Breast epithelium (tissue), 4 donors: ENCODE measurements at regions of chr2 and their contacts with region 1.

Region 1: GRCh38 chr2:120758181-120759144 is 22.8 kb downstream of the GLI2 start:
- DNase-seq: no peak
- H3K4me3 ChIP-seq: no peak overlapping the region
- H3K27ac ChIP-seq: peak overlapping the region; percentile 52 to 90
- H3K4me1 ChIP-seq: no peaks in the 10 kb centered on the region
- H3K27me3 ChIP-seq: no peaks in the 10 kb centered on the region
- CTCF ChIP-seq: no peak
- POLR2A ChIP-seq: no peak

Region 2: GRCh38 chr2:120680136-120680761 is 78.2 kb before region 1 on chr2:
- intact Hi-C with region 1: no loop called
- DNase-seq: peak; percentile 74 to 93
- H3K4me3 ChIP-seq: peak overlapping the region in 1 of 3 donors; percentile 30
- H3K27ac ChIP-seq: no peak overlapping the region
- H3K4me1 ChIP-seq: peaks cover 0 to 4% of the 10 kb centered on the region in 2 donors
- H3K27me3 ChIP-seq: no peaks in the 10 kb centered on the region
- CTCF ChIP-seq: peak; percentile 85 to 98 (median 92)
- POLR2A ChIP-seq: no peak

Region 3: GRCh38 chr2:120787822-120788700 is 29.6 kb after region 1 on chr2:
- intact Hi-C with region 1: loop called (anchors 1 kb)
- DNase-seq: no peak
- H3K4me3 ChIP-seq: no peak overlapping the region
- H3K27ac ChIP-seq: no peak overlapping the region
- H3K4me1 ChIP-seq: no peaks in the 10 kb centered on the region
- H3K27me3 ChIP-seq: no peaks in the 10 kb centered on the region
- CTCF ChIP-seq: no peak
- POLR2A ChIP-seq: no peak